ENCODE measurements at regions of chr1 and their contacts with region 1.

Region 1: DNA sequence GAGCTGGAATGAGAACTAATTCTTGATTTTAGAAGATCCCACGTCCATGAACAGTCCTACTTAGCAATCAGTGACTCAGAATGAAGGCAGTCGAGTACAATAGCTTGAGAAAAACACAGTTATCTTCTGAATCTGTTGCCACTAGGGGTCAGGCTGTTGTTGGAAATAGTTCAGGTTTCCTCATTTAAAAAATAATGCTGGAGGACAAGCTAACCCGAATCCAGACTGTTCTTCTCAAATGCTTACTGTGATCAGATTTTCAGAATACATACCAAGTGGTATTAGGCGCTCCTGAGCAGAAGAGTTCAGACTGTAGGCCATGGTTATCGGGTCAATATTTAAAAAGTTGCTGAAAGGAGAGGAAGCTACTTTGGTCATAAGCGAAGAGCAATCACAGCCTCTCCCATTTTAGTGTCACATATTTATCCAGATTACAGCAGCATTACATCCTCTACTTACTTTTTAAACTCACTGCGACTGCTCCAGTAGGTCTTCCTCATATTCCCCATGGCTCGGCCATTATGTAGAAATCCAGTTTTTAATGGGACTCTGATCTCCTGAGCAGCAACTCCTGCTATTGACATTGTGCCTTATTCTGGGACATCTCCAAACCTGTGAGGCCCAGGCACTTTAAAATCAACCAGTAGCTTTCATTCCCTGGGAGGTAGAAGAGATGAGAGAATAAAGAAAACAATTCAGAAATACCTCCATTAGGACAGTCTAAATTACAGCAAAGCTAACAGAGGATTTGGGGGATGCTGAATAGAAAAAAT is 10.9 kb downstream of the ERRFI1 start:
- DNase-seq: peak; percentile 59
- H3K4me3 ChIP-seq: no peak overlapping the region
- H3K27me3 ChIP-seq: no peaks in the 10 kb centered on the region
- CTCF ChIP-seq: peak; percentile 66

Region 2: GRCh38 chr1:7975212-7975865 is 39.9 kb before region 1 on chr1:
- CTCF ChIA-PET with region 1: interaction called, 12 read pairs
- POLR2A ChIA-PET with region 1: no interaction called
- DNase-seq: no peak
- H3K4me3 ChIP-seq: no peak overlapping the region
- H3K27me3 ChIP-seq: no peaks in the 10 kb centered on the region
- CTCF ChIP-seq: peak; percentile 94

Region 3: DNA sequence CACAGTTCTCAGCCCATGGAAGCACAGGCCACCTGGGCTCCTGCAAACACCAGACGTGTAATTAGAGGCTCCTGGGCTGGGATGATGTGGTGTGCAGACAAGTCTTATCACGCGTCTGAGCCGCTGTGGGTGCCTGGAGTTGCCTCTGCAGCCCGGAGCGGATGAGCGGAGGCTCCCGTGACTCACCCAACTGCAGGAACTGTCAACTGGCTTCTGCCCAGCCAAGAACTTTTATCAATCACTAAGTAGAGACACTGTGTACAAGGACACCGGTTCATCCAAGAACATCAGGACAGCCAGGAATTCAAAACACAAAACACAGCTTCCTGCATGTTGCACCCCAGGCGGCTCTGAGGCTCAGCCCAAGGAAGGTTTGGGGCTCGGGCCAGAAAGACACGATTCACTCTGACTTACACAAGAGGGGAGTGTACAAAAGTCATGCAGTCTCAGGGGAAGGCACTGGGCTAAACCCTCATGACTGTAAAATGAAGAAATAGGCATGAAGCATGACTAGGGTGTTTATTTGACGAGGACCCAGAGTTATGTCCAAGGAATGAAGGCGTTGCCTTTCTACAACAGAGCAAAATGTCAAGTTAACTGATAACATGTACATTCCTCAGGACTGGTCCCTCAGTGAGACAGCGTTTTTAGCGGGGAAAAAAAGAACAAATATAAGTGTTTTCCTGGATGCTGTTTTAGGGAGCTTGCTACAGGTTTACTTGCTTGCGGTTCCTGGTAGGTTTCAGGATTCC is 10.2 kb before region 1 on chr1:
- CTCF ChIA-PET with region 1: interaction called, 15 read pairs
- POLR2A ChIA-PET with region 1: no interaction called
- DNase-seq: peak; percentile 90
- H3K4me3 ChIP-seq: no peak overlapping the region
- H3K27me3 ChIP-seq: no peaks in the 10 kb centered on the region
- CTCF ChIP-seq: no peak

Region 4: GRCh38 chr1:8314346-8315280 is 299.4 kb after region 1 on chr1:
- CTCF ChIA-PET with region 1: interaction called, 114 read pairs
- POLR2A ChIA-PET with region 1: interaction called, 3 read pairs
- DNase-seq: no peak
- H3K4me3 ChIP-seq: no peak overlapping the region
- H3K27me3 ChIP-seq: no peaks in the 10 kb centered on the region
- CTCF ChIP-seq: peak; percentile 89

Region 5: GRCh38 chr1:8348777-8349491 is 333.7 kb after region 1 on chr1:
- CTCF ChIA-PET with region 1: interaction called, 78 read pairs
- POLR2A ChIA-PET with region 1: no interaction called
- DNase-seq: no peak
- H3K4me3 ChIP-seq: no peak overlapping the region
- H3K27me3 ChIP-seq: no peaks in the 10 kb centered on the region; the same call in 1 of the 2 replicates
- CTCF ChIP-seq: peak; percentile 90